BJ (cell line): ENCODE measurements at regions of chr14 and their contacts with region 1.

Region 1: GRCh38 chr14:58637391-58638230 is at the start of gene DACT1:
- DNase-seq: no peak
- H3K4me3 ChIP-seq: peak within 1 kb of the TSS; percentile 78
- H3K27me3 ChIP-seq: no peaks in the 10 kb centered on the region
- CTCF ChIP-seq: no peak
- polyA plus RNA-seq, gene DACT1: 17.8 and 18.8 TPM in 2 replicates

Region 2: GRCh38 chr14:58455587-58456228 is 181.9 kb before region 1 on chr14:
- CTCF ChIA-PET with region 1: no interaction called
- POLR2A ChIA-PET with region 1: no interaction called
- DNase-seq: no peak
- H3K4me3 ChIP-seq: no peak overlapping the region
- H3K27me3 ChIP-seq: no peaks in the 10 kb centered on the region
- CTCF ChIP-seq: no peak

Region 3: DNA sequence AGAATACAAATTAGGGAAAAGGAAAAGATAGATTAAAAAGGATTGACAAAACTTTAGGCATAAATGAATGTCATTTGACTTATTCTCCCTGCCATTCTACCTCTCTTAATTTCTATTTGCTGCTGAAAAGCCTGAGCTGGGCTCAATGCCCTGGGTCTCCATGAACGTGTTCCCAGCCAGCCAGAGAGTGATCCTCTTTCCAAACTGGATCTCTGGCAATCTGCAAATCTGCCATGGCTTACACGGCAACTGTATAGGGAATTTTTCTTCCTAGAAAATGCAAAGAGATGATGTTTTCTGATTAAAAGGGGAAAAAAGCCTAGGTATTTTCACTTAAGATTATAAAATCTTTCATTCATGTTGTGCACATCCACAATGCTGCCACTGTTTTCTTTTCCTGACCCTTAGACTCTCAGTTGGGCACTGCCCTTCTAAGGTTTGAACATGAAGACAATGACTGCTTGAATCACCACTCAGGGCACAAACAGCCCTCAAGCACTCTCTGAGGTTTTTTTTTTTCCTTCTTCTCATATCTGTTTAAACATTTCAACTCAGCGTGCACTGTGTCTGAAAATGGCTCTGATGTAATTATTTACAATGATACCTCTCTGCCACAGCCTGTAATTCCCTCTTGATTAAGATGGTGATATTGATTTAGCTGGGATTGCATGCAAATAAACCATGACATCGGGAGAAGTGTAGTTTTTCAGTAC is 60.5 kb after region 1 on chr14:
- CTCF ChIA-PET with region 1: no interaction called
- POLR2A ChIA-PET with region 1: no interaction called
- DNase-seq: no peak
- H3K4me3 ChIP-seq: no peak overlapping the region
- H3K27me3 ChIP-seq: no peaks in the 10 kb centered on the region
- CTCF ChIP-seq: no peak

Region 4: GRCh38 chr14:58846682-58847465 is 209.3 kb after region 1 on chr14:
- CTCF ChIA-PET with region 1: no interaction called
- POLR2A ChIA-PET with region 1: no interaction called
- DNase-seq: no peak
- H3K4me3 ChIP-seq: no peak overlapping the region
- H3K27me3 ChIP-seq: no peaks in the 10 kb centered on the region
- CTCF ChIP-seq: no peak

Region 5: GRCh38 chr14:58942516-58942915 is 304.9 kb after region 1 on chr14:
- CTCF ChIA-PET with region 1: interaction called, 3 read pairs
- POLR2A ChIA-PET with region 1: interaction called, 18 read pairs
- DNase-seq: no peak
- H3K4me3 ChIP-seq: no peak overlapping the region
- H3K27me3 ChIP-seq: peaks cover 14% of the 10 kb centered on the region
- CTCF ChIP-seq: no peak

Region 6: DNA sequence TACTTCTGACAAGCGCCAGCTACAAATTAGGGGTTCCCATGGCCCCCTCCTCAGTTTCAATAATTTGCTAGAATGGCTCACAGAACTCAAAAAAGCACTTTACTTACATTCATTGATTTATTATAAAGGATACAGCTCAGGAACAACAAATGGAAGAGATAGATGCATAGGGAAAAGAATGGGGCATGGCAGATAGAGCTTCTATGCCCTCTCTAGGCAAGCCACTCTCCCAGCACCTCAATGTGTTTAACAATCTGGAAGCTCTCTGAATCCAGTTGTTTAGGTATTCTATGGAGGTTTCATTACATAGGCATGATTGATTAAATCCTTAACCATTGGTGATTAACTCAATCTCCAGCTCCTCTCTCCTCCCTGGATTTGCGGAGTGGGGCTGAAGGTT is 366.4 kb after region 1 on chr14:
- CTCF ChIA-PET with region 1: interaction called, 21 read pairs
- POLR2A ChIA-PET with region 1: no interaction called
- DNase-seq: no peak
- H3K4me3 ChIP-seq: no peak overlapping the region
- H3K27me3 ChIP-seq: peaks cover 2% of the 10 kb centered on the region
- CTCF ChIP-seq: peak; percentile 30; the same call in 1 of the 2 replicates